Heart right ventricle (tissue), 16 donors: ENCODE measurements at regions of chr9 and their contacts with region 1.

Region 1: DNA sequence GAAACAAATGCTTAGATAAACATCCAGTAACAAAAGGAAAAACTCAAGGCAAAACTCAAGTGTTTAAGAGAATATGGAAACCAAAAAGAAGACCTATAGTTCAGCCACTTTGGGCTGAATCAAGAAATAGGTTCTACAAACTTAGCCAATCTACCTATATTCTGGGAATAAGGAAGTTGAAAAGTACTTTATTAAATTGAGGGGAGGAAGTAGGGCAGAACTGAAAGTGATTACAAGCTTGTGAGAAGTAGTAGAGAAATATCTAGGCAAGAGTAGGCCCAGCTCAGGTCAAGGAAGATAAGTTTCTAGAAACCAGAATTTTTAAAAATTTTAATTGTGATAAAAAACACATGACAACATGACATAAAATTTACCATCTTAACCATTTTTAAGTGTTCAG is 384.8 kb upstream of the PCSK5 start:
- DNase-seq: no peak
- ATAC-seq: no peak
- H3K4me3 ChIP-seq: no peak overlapping the region
- H3K27ac ChIP-seq: no peak overlapping the region
- H3K4me1 ChIP-seq: peaks cover 0 to 25% (median 0%) of the 10 kb centered on the region in 9 donors
- H3K27me3 ChIP-seq: no peaks in the 10 kb centered on the region
- CTCF ChIP-seq: no peak

Region 2: DNA sequence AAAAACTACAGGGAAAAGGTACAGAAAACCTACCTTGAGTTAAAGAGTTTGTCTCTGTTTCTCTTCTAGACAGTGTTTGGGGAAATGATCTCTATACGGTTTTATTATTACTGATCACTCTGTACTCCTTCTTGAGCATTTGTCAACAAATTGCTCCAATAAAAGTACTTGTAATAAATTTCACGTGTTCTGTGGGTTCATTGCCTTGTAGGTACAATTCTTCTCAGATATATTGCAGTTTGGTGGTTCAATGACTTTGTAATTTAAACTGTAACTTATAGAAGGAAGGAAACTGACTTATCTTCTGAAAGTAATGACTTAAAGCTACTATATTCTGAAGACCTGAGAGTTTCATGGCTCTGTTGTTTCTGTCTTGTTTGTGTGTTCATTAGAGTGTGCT is 64.9 kb after region 1 on chr9:
- intact Hi-C with region 1: loop called in 1 of 10 experiments (anchors 10 kb)
- DNase-seq: no peak
- ATAC-seq: no peak
- H3K4me3 ChIP-seq: no peak overlapping the region
- H3K27ac ChIP-seq: no peak overlapping the region
- H3K4me1 ChIP-seq: no peaks in the 10 kb centered on the region
- H3K27me3 ChIP-seq: no peaks in the 10 kb centered on the region
- CTCF ChIP-seq: no peak